Endothelial cell of umbilical vein (primary cell): ENCODE measurements at regions of chr2 and their contacts with region 1.

Region 1: GRCh38 chr2:97868986-97869721 is 126.6 kb downstream of the TMEM131 start:
- DNase-seq: peak; percentile 95
- H3K4me3 ChIP-seq: no peak overlapping the region
- H3K27ac ChIP-seq: peak overlapping the region; percentile 65
- H3K4me1 ChIP-seq: peaks cover 29% of the 10 kb centered on the region
- H3K27me3 ChIP-seq: no peaks in the 10 kb centered on the region
- CTCF ChIP-seq: no peak
- POLR2A ChIP-seq: peak; percentile 22

Region 2: GRCh38 chr2:97788986-97789644 is 80.0 kb before region 1 on chr2:
- CTCF ChIA-PET with region 1: no interaction called
- POLR2A ChIA-PET with region 1: no interaction called
- dilution Hi-C with region 1: no loop called
- intact Hi-C with region 1: no loop called
- DNase-seq: no peak
- H3K4me3 ChIP-seq: no peak overlapping the region
- H3K27ac ChIP-seq: no peak overlapping the region
- H3K4me1 ChIP-seq: no peaks in the 10 kb centered on the region
- H3K27me3 ChIP-seq: no peaks in the 10 kb centered on the region
- CTCF ChIP-seq: no peak
- POLR2A ChIP-seq: no peak

Region 3: DNA sequence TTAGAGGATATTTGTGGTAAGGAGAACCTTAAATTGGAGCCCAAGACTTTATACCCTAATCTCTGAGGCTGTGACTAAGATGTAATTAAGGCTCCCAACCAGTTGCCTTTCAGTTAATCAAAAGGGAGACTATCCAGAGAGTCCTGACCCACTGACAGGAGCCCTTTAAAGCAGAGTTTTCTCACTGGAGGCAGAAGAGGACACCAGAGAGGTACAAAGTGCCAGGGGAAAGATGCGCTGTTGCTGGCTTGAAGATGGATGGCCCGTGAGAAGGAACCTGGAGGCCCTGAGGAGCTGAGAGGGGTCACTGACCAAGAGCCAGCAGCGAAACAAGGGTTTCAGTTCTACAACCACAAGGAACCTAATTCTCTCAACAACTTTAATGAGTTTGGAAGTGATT is 10.7 kb before region 1 on chr2:
- CTCF ChIA-PET with region 1: no interaction called
- POLR2A ChIA-PET with region 1: no interaction called
- dilution Hi-C with region 1: no loop called
- intact Hi-C with region 1: no loop called
- DNase-seq: no peak
- H3K4me3 ChIP-seq: no peak overlapping the region
- H3K27ac ChIP-seq: no peak overlapping the region
- H3K4me1 ChIP-seq: no peaks in the 10 kb centered on the region
- H3K27me3 ChIP-seq: no peaks in the 10 kb centered on the region
- CTCF ChIP-seq: no peak
- POLR2A ChIP-seq: no peak

Region 4: GRCh38 chr2:97995734-97996624 is 126.8 kb after region 1 on chr2 and contains the start of gene TMEM131:
- CTCF ChIA-PET with region 1: no interaction called
- POLR2A ChIA-PET with region 1: no interaction called
- dilution Hi-C with region 1: no loop called
- intact Hi-C with region 1: loop called (anchors 1 kb)
- DNase-seq: peak; percentile 94
- H3K4me3 ChIP-seq: peak within 1 kb of the TSS; percentile 59 to 99 (median 97)
- H3K27ac ChIP-seq: peak within 1 kb of the TSS; percentile 79
- H3K4me1 ChIP-seq: peaks cover 17% of the 10 kb centered on the region
- H3K27me3 ChIP-seq: peaks cover 2 to 7% of the 10 kb centered on the region in 2 experiments
- CTCF ChIP-seq: no peak
- POLR2A ChIP-seq: peak; percentile 69
- total RNA-seq, gene TMEM131: 24.1 and 28.6 TPM in 2 replicates